Naive thymus-derived CD4-positive, alpha-beta T cell (primary cell): ENCODE measurements at regions of chr6 and their contacts with region 1.

Region 1: GRCh38 chr6:70884074-70884983 is 72.5 kb downstream of the B3GAT2 start:
- DNase-seq: peak; percentile 19 to 64 (median 45)
- ATAC-seq: peak; percentile 85
- H3K4me3 ChIP-seq: no peak overlapping the region
- H3K4me3 Mint-ChIP-seq: no peak overlapping the region
- H3K27ac ChIP-seq: no peak overlapping the region
- H3K27ac Mint-ChIP-seq: no peak overlapping the region
- H3K4me1 ChIP-seq: no peaks in the 10 kb centered on the region
- H3K4me1 Mint-ChIP-seq: peaks cover 0 to 4% (median 0%) of the 10 kb centered on the region in 7 donors
- H3K27me3 ChIP-seq: no peaks in the 10 kb centered on the region
- H3K27me3 Mint-ChIP-seq: peaks cover 8 to 26% (median 20%) of the 10 kb centered on the region in 5 donors

Region 2: DNA sequence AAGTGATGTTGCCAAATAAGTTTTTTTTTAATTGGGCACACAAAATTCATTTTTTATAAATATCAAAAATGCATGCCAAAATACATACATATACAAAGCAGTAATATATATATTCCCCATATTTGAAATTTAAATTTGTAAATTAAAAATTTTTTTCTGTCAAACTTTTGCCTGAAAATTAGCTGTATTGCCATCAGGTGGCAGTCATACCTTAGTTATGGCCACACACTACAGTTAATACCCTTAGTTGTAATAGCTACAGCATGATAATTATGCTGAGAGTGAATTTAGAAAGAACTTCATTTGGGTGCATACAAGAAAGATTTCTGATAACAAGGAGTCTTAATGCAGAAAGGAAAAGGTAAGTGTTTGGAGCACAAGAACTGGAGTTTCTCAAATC is 363.8 kb before region 1 on chr6:
- CTCF ChIA-PET with region 1: interaction called, 3 read pairs
- POLR2A ChIA-PET with region 1: no interaction called
- intact Hi-C with region 1: loop called (anchors 1 kb)
- DNase-seq: peak in 5 of 9 donors; percentile 11 to 32 (median 15)
- ATAC-seq: peak; percentile 47
- H3K4me3 ChIP-seq: no peak overlapping the region
- H3K4me3 Mint-ChIP-seq: no peak overlapping the region
- H3K27ac ChIP-seq: no peak overlapping the region
- H3K27ac Mint-ChIP-seq: no peak overlapping the region
- H3K4me1 ChIP-seq: no peaks in the 10 kb centered on the region
- H3K4me1 Mint-ChIP-seq: peaks cover 0 to 12% (median 9%) of the 10 kb centered on the region in 7 donors
- H3K27me3 ChIP-seq: no peaks in the 10 kb centered on the region
- H3K27me3 Mint-ChIP-seq: no peaks in the 10 kb centered on the region

Region 3: DNA sequence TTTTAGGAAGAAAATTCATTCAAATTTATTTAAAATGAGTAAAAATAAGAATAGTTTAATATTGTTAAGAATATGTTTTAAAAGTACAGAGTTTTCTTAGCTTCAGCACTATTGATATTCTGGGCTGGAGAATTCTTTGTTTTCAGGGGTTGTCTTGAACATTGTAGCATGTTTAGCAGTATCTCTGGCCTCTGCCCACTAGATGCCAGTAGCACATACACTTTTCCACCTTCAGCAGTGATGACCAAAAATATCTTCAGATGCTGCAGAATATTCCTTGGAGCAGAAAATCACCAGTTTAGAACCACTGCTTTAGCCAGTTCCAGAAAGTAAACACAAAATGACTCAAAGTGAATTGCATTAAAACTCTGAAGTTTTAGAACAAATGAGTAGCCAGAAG is 337.0 kb before region 1 on chr6:
- CTCF ChIA-PET with region 1: no interaction called
- POLR2A ChIA-PET with region 1: no interaction called
- intact Hi-C with region 1: loop called (anchors 1 kb)
- DNase-seq: peak in 2 of 9 donors; percentile 5 to 17
- ATAC-seq: no peak
- H3K4me3 ChIP-seq: no peak overlapping the region
- H3K4me3 Mint-ChIP-seq: no peak overlapping the region
- H3K27ac ChIP-seq: no peak overlapping the region
- H3K27ac Mint-ChIP-seq: no peak overlapping the region
- H3K4me1 ChIP-seq: no peaks in the 10 kb centered on the region
- H3K4me1 Mint-ChIP-seq: peaks cover 0 to 2% (median 0%) of the 10 kb centered on the region in 7 donors
- H3K27me3 ChIP-seq: no peaks in the 10 kb centered on the region
- H3K27me3 Mint-ChIP-seq: peaks cover 0 to 8% (median 0%) of the 10 kb centered on the region in 5 donors

Region 4: GRCh38 chr6:70806086-70806485 is 78.2 kb before region 1 on chr6:
- CTCF ChIA-PET with region 1: no interaction called
- POLR2A ChIA-PET with region 1: no interaction called
- intact Hi-C with region 1: loop called in 1 of 2 experiments (anchors 2 kb)
- DNase-seq: no peak
- ATAC-seq: no peak
- H3K4me3 ChIP-seq: no peak overlapping the region
- H3K4me3 Mint-ChIP-seq: no peak overlapping the region
- H3K27ac ChIP-seq: no peak overlapping the region
- H3K27ac Mint-ChIP-seq: no peak overlapping the region
- H3K4me1 ChIP-seq: no peaks in the 10 kb centered on the region
- H3K4me1 Mint-ChIP-seq: peaks cover 0 to 34% (median 25%) of the 10 kb centered on the region in 7 donors
- H3K27me3 ChIP-seq: no peaks in the 10 kb centered on the region
- H3K27me3 Mint-ChIP-seq: no peaks in the 10 kb centered on the region

Region 5: DNA sequence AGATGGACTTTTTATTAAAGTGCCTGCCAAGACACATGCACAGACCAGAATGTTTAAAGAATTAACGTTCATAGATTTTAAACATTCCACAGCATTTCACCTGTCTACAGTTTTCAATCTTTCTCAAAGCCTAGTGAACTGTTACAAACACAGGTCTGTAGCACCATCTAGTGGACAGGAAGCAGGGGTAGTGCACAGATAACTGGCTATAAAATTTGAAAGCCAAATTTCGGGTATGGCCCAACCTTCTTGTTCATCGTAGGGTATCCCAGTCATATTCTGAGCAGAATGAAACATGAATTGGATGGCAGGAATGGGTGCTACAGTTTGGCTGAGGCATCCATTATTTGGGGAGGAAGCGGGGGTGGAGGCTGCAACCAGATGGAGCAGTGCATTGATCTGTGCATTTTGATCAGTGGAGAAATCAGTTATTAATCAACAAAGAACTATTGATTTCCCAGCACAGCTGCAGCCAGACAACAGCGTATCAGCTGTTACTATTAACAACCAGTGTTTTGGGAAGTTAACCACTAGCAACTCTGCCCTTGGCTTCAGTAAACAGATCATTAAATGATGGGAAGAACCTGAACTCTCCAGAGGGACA is 128.6 kb after region 1 on chr6:
- CTCF ChIA-PET with region 1: no interaction called
- POLR2A ChIA-PET with region 1: no interaction called
- intact Hi-C with region 1: no loop called
- DNase-seq: peak in 5 of 9 donors; percentile 17 to 34 (median 26)
- ATAC-seq: peak; percentile 64
- H3K4me3 ChIP-seq: no peak overlapping the region
- H3K4me3 Mint-ChIP-seq: no peak overlapping the region
- H3K27ac ChIP-seq: no peak overlapping the region
- H3K27ac Mint-ChIP-seq: no peak overlapping the region
- H3K4me1 ChIP-seq: no peaks in the 10 kb centered on the region
- H3K4me1 Mint-ChIP-seq: no peaks in the 10 kb centered on the region
- H3K27me3 ChIP-seq: no peaks in the 10 kb centered on the region
- H3K27me3 Mint-ChIP-seq: peaks cover 7 to 41% (median 30%) of the 10 kb centered on the region in 5 donors